ENCODE measurements at regions of chr1 and their contacts with region 1.

Region 1: DNA sequence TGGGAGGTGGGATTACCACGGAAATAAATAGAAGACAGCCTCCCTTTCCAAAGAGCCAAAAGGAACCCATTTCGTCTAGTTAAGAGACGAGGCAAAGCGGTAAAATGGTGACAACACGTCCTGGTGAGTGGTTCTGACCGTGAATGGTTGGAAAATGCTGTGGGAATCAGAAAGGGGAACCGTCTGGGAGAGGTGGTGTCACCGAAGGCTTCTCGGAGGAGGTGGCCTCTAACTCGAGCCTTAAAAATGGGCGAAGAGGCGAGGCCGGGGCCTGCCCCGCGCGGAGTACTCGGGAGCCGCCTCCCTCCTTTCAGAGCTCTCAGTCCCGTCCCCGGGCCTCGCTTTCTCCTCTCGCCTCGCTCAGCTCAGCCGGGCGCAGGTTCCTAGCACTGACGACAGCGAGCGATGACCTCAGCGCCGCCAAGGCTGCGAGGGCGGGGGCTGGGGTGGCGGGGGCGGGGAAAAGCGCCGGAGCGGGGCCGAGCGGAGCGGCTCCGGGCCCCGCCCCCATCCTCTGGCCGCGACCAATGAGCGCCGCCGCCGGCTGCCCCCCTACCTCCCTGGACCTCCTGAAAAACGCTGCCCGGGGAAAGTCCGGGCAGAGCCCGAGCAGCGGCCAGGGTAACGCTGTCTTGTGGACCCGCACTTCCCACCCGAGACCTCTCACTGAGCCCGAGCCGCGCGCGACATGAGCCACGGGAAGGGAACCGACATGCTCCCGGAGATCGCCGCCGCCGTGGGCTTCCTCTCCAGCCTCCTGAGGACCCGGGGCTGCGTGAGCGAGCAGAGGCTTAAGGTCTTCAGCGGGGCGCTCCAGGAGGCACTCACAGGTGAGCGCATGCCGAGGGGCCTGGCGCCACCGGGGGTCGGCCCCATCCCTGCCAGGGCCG is at the start of gene BTG2:
- DNase-seq: peak; percentile 99
- H3K27ac ChIP-seq: peak within 1 kb of the TSS; percentile 92
- CTCF ChIP-seq: no peak

Region 2: DNA sequence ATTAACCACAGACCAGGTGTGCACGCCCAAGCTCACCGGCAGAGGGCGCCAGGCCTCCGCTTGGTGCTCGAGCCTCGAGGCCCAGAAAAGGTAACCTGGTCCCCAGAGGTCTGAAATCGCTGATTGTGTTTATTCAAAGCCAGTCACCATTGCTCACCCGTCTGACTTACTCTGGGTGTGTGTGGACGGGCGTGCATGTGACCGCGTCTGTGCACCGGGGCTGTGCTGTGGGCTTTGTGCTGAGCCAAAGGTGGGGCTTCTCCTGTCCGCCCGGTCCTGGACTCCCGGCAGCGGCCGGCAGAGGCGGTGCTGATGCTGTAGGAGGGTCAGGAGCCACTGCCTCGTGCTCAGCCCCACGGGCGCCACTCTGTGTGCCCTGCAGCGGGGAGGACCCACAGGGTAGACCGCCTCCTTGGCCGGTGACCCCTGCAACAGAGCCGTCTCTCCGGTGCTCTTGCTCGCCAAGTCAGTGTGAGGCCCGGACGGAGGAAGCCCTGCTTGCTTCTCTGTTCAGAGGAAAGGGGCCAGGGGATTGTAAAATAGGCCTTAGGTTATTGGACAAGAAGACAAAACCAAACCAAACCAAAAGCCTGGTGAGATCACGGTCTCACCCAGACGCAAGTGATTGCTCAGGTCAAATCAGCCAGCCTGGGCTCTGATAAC is 31.8 kb before region 1 on chr1:
- CTCF ChIA-PET with region 1: interaction called, 44 read pairs
- POLR2A ChIA-PET with region 1: interaction called, 5 read pairs
- DNase-seq: peak; percentile 89
- H3K27ac ChIP-seq: peak overlapping the region; percentile 55
- CTCF ChIP-seq: peak; percentile 98

Region 3: DNA sequence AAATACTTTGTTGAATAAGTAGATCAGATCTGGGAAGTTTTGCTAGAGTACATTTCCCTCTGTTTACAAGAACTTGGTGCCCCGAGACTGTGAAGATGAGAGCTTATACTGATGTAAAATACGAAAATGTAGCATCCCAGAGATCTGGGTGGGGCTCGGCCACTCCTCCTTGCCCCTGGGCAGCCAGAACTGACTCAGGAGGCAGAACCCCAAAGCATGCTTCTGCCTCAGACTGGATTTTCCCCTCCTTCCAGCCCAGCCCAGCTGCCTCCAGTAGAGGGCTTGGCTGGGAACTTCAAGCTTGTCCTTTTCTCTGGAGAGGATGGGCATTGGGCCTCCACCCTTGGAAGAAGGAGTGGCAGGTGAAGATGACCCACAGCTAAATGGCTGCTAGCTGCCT is 24.2 kb before region 1 on chr1:
- CTCF ChIA-PET with region 1: interaction called, 12 read pairs
- POLR2A ChIA-PET with region 1: interaction called, 6 read pairs
- DNase-seq: peak; percentile 92
- H3K27ac ChIP-seq: peak overlapping the region; percentile 64
- CTCF ChIP-seq: no peak; the same call in 1 of the 2 replicates

Region 4: DNA sequence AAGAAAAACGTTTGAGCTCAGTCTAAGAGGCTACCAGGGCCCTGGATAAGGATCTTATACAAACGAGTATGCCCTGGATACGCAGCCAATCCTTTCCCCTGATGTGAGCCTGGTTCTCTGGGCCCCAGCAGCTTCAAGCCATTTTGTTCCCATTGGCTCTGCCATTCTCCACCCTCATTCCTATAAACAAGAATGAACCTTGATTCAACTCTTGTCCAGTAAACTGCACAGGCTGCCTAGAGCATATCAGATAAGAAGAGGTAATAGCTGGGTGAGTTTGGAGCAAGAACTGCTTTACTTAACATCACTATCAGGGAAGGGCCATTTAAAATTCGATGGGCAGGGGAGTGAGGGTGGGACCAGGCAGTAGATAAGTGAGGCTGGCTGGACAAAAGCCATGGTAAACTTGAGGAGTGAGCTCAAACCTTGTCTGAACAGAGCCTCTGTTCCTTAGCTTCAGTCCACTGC is 11.5 kb after region 1 on chr1:
- CTCF ChIA-PET with region 1: interaction called, 11 read pairs
- POLR2A ChIA-PET with region 1: no interaction called
- DNase-seq: no peak
- H3K27ac ChIP-seq: no peak overlapping the region
- CTCF ChIP-seq: no peak

Region 5: GRCh38 chr1:203326830-203327683 is 21.9 kb after region 1 on chr1:
- CTCF ChIA-PET with region 1: interaction called, 21 read pairs
- POLR2A ChIA-PET with region 1: interaction called, 17 read pairs
- DNase-seq: peak; percentile 99
- H3K27ac ChIP-seq: peak overlapping the region; percentile 90
- CTCF ChIP-seq: no peak

Measured in RWPE1 (cell line).